Ascending aorta (tissue), 2 donors: ENCODE measurements at regions of chr2 and their contacts with region 1.

Region 1: GRCh38 chr2:48471048-48471474 is 58.9 kb upstream of the STON1 start:
- DNase-seq: no peak
- H3K4me3 ChIP-seq: no peak overlapping the region
- H3K27ac ChIP-seq: no peak overlapping the region
- H3K4me1 ChIP-seq: no peaks in the 10 kb centered on the region
- H3K27me3 ChIP-seq: no peaks in the 10 kb centered on the region
- CTCF ChIP-seq: peak; percentile 48 to 65 (median 62)

Region 2: GRCh38 chr2:48589170-48589767 is 118.2 kb after region 1 on chr2:
- intact Hi-C with region 1: loop called (anchors 2 kb)
- DNase-seq: no peak
- H3K4me3 ChIP-seq: no peak overlapping the region
- H3K27ac ChIP-seq: no peak overlapping the region
- H3K4me1 ChIP-seq: no peaks in the 10 kb centered on the region
- H3K27me3 ChIP-seq: no peaks in the 10 kb centered on the region
- CTCF ChIP-seq: peak; percentile 48 to 71 (median 53)